Aorta (tissue), 5 donors: ENCODE measurements at regions of chr1 and their contacts with region 1.

Region 1: GRCh38 chr1:52055066-52055865 is at the start of gene TXNDC12:
- DNase-seq: peak; percentile 89 to 90
- ATAC-seq: peak; percentile 93
- H3K4me3 ChIP-seq: peak within 1 kb of the TSS; percentile 65 to 79
- H3K27ac ChIP-seq: peak within 1 kb of the TSS in 1 of 2 donors; percentile 86
- H3K4me1 ChIP-seq: peaks cover 0 to 11% of the 10 kb centered on the region in 2 donors
- H3K27me3 ChIP-seq: no peaks in the 10 kb centered on the region
- total RNA-seq, gene TXNDC12: 27.1 to 46.5 TPM

Region 2: GRCh38 chr1:52022133-52022532 is 33.1 kb before region 1 on chr1:
- intact Hi-C with region 1: no loop called
- DNase-seq: no peak
- ATAC-seq: no peak
- H3K4me3 ChIP-seq: no peak overlapping the region
- H3K27ac ChIP-seq: no peak overlapping the region
- H3K4me1 ChIP-seq: no peaks in the 10 kb centered on the region
- H3K27me3 ChIP-seq: no peaks in the 10 kb centered on the region

Region 3: DNA sequence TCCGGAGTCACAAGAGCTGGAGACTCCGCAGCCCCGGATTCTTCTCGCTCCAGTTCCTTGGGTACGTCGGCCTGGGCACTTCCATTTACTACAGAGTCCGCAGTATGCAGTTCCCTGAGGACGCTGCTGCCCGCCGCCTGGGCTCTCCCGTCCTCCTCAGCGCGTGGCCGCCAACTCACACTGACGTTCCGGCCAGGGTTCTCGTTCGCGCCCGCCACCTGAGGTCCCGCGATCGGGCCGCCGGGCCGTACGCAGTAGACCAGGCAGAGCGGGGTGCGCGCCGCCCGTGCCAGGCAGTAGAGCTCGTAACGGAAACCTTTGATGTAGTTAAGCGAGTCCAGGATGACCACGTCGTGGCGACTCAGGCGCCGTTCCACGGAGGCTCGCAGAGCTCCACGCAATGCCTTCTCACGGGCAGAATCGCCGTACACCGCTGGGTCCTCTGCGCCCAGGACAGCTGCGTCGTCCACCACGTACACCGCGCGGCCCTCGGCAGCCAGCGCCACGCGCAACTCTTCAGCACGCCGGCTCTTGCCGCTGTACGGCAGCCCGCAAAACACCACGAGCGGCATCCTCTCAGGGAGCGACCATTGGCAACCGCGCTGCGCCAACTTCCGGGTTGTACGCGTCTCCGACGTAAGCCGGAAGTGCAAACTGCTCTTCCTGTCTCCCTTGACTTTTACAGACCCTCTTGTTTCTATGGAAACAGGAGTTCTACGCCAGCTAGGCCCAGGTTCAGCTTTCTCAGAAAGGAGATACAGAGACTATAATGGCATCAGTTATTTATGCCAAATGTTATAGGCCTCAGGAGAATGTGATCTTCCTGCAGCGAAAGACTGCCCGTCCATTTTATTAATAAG is 21.8 kb before region 1 on chr1 and contains the start of gene KTI12:
- intact Hi-C with region 1: loop called in 1 of 2 experiments (anchors 2 kb)
- DNase-seq: peak; percentile 93 to 95
- ATAC-seq: peak; percentile 95
- H3K4me3 ChIP-seq: peak within 1 kb of the TSS; percentile 43 to 45
- H3K27ac ChIP-seq: peak within 1 kb of the TSS in 1 of 2 donors; percentile 84
- H3K4me1 ChIP-seq: no peaks in the 10 kb centered on the region
- H3K27me3 ChIP-seq: no peaks in the 10 kb centered on the region
- total RNA-seq, gene KTI12: 7.7 to 7.9 TPM